IMR-90 (cell line): ENCODE measurements at regions of chr10 and their contacts with region 1.

Region 1: GRCh38 chr10:283916-284356 is 148.7 kb downstream of the ZMYND11 start:
- DNase-seq: no peak
- ATAC-seq: no peak
- H3K4me3 ChIP-seq: no peak overlapping the region
- H3K27ac ChIP-seq: no peak overlapping the region
- H3K4me1 ChIP-seq: peaks cover 12% of the 10 kb centered on the region
- H3K27me3 ChIP-seq: no peaks in the 10 kb centered on the region
- CTCF ChIP-seq: no peak
- POLR2A ChIP-seq: no peak
- RAD21 ChIP-seq: no peak

Region 2: DNA sequence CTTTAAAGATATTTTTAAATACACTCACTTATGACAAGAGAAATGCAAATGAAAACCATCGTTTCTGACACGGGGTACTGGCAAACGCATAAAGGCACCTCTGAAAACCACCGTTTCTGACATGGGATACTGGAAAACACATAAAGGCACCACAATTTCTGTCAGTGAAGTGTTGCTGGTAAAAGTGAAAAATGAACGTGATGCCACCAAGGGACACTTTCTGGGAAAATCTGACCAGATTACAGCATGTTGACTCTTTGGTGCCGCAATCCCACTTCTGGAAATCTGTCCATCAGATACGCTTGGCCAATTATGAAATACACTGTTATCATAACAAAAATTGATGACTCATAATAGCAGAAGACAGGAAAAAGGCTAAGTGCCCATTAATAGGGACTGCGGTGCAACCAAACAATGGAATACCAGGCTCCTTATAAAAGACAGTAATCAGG is 16.9 kb before region 1 on chr10:
- CTCF ChIA-PET with region 1: no interaction called
- POLR2A ChIA-PET with region 1: interaction called, 24 read pairs
- dilution Hi-C with region 1: no loop called
- in situ Hi-C with region 1: no loop called
- intact Hi-C with region 1: no loop called
- DNase-seq: peak; percentile 51
- ATAC-seq: peak; percentile 53
- H3K4me3 ChIP-seq: no peak overlapping the region
- H3K27ac ChIP-seq: no peak overlapping the region
- H3K4me1 ChIP-seq: peaks cover 3% of the 10 kb centered on the region
- H3K27me3 ChIP-seq: no peaks in the 10 kb centered on the region
- CTCF ChIP-seq: no peak
- POLR2A ChIP-seq: no peak
- RAD21 ChIP-seq: no peak